ENCODE measurements at regions of chr12 and their contacts with region 1.

Region 1: DNA sequence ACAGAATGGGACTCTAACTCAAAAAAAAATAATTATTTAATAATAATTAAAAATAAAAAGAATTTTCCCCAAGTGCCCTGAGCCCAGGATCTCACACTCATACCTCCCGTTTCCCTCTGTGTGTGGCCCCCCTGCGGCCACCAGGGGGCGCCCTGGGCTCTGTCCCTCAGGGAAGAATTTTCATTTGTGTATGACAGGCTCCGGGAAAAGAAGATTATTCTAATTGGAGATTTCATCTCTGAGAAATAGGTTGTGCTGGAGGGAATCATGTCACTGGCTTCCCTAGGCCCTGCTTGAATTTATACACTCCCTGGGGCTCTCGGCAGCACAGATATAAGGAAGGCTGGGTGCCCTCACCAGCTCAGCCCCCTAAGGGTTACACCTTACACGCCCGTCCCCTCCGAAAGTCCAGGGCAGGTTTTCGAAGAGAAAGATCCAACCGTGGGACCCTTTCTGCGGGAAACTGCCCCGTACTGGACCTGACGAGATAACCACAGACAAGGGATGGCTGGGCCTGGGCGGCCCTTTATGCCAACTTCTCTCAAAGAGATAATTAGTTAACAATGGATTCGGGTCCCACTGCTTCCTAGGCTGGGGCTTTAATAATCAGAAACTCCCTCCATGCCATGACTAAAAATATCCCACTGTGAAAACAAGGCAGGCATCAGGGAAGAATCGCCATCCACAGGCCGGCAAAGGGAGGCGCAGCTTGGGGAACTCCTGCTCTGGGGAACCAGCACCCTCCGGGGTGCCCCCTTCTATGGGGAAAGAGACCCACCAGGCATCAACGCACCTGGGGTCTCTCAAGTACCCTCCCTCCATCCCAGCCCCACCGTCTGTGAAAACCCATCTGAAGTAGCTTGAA is 80.7 kb downstream of the KDM2B start:
- DNase-seq: peak; percentile 55 to 88 (median 76)
- ATAC-seq: peak; percentile 80
- H3K4me3 ChIP-seq: no peak overlapping the region
- H3K4me3 Mint-ChIP-seq: no peak overlapping the region
- H3K27ac ChIP-seq: no peak overlapping the region
- H3K27ac Mint-ChIP-seq: no peak overlapping the region
- H3K4me1 ChIP-seq: peaks cover 13% of the 10 kb centered on the region
- H3K4me1 Mint-ChIP-seq: peaks cover 12% of the 10 kb centered on the region
- H3K27me3 ChIP-seq: no peaks in the 10 kb centered on the region
- H3K27me3 Mint-ChIP-seq: no peaks in the 10 kb centered on the region
- CTCF ChIP-seq: peak; percentile 97

Region 2: GRCh38 chr12:121536899-121537813 is 37.0 kb after region 1 on chr12:
- CTCF ChIA-PET with region 1: interaction called, 12 read pairs
- POLR2A ChIA-PET with region 1: no interaction called
- intact Hi-C with region 1: loop called (anchors 1 to 2 kb)
- DNase-seq: peak in 8 of 9 experiments; percentile 22 to 83 (median 58)
- ATAC-seq: peak; percentile 5
- H3K4me3 ChIP-seq: peak overlapping the region; percentile 52 to 68
- H3K4me3 Mint-ChIP-seq: peak overlapping the region; percentile 80
- H3K27ac ChIP-seq: peak overlapping the region; percentile 80 to 83
- H3K27ac Mint-ChIP-seq: peak overlapping the region; percentile 96
- H3K4me1 ChIP-seq: peaks cover 34% of the 10 kb centered on the region
- H3K4me1 Mint-ChIP-seq: peaks cover 43% of the 10 kb centered on the region
- H3K27me3 ChIP-seq: no peaks in the 10 kb centered on the region
- H3K27me3 Mint-ChIP-seq: no peaks in the 10 kb centered on the region
- CTCF ChIP-seq: no peak

Region 3: DNA sequence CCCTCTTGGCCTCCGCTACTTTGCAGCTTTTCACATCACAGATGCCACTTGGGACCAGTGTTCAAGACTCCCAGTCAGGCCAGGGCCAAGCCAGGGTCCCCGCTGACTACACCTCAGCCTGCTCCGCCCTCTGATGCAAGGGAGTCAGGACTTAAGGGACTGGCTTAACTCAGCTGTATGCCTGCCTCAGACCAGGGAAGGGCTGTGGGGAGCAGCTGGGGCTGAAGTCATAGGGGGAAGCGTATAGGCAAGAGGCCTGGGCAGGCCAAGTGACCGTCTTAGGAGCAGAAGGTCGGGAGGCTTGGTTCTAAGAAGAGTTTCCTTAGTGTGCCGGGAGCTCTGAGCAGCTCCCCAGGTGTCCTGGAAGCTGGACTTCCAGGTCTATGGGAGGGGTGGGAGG is 58.8 kb after region 1 on chr12:
- CTCF ChIA-PET with region 1: interaction called, 18 read pairs
- POLR2A ChIA-PET with region 1: no interaction called
- intact Hi-C with region 1: loop called in 1 of 2 experiments (anchors 5 kb)
- DNase-seq: no peak
- ATAC-seq: no peak
- H3K4me3 ChIP-seq: no peak overlapping the region
- H3K4me3 Mint-ChIP-seq: no peak overlapping the region
- H3K27ac ChIP-seq: peak overlapping the region in 1 of 2 experiments; percentile 96
- H3K27ac Mint-ChIP-seq: peak overlapping the region; percentile 78
- H3K4me1 ChIP-seq: no peaks in the 10 kb centered on the region
- H3K4me1 Mint-ChIP-seq: peaks cover 12% of the 10 kb centered on the region
- H3K27me3 ChIP-seq: no peaks in the 10 kb centered on the region
- H3K27me3 Mint-ChIP-seq: no peaks in the 10 kb centered on the region
- CTCF ChIP-seq: no peak

Region 4: GRCh38 chr12:121579981-121580868 is 80.1 kb after region 1 on chr12:
- CTCF ChIA-PET with region 1: interaction called, 6 read pairs
- POLR2A ChIA-PET with region 1: no interaction called
- intact Hi-C with region 1: loop called in 1 of 2 experiments (anchors 2 kb)
- DNase-seq: peak; percentile 63 to 91 (median 82)
- ATAC-seq: peak; percentile 62
- H3K4me3 ChIP-seq: peak overlapping the region; percentile 58 to 73
- H3K4me3 Mint-ChIP-seq: peak overlapping the region; percentile 95
- H3K27ac ChIP-seq: peak overlapping the region; percentile 84 to 85
- H3K27ac Mint-ChIP-seq: peak overlapping the region; percentile 98
- H3K4me1 ChIP-seq: peaks cover 42% of the 10 kb centered on the region
- H3K4me1 Mint-ChIP-seq: peaks cover 51% of the 10 kb centered on the region
- H3K27me3 ChIP-seq: no peaks in the 10 kb centered on the region
- H3K27me3 Mint-ChIP-seq: no peaks in the 10 kb centered on the region
- CTCF ChIP-seq: no peak

Region 5: DNA sequence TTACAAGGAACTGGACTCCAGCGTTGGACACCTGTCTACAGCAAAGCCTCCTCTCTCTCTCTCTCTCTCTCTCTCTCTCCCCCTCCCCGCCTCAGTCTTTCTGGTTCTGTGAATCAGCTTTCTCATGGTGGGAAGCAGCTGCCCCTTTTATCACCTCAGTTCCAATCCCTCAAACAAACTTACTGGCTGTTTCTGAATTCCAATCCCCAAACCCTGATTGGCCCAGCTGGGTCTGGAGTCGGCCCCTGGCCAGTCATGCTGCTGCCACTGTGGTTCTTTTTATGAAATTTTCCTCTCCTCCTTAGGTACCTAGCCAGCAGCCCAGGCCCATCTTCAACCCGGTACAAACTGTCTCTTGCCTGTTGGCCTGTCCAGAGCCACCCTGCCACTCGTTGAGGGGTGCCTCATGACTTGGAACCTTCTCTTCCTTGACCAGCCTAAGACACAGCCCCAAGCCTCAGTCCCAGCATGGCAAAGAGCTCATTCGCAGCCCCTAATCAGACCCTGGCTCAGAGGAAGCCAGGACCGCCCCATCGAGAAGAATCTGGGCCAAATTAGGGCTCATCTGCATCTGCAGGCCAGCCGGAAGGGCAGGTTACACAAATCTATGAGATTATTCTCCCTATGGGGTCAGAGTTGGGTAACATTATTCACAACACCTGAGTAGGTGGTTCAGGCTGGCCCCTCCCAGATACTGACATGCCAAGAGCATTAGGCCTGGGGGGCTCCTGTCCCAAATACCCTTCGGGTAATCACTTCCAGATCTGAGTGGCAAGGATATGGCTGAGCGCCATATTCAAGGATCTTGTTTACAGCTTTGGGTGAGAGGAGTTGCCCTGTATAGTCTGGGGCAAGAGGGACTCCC is 178.8 kb after region 1 on chr12:
- CTCF ChIA-PET with region 1: interaction called, 14 read pairs
- POLR2A ChIA-PET with region 1: interaction called, 3 read pairs
- intact Hi-C with region 1: loop called (anchors 1 kb)
- DNase-seq: no peak
- ATAC-seq: no peak
- H3K4me3 ChIP-seq: no peak overlapping the region
- H3K4me3 Mint-ChIP-seq: no peak overlapping the region
- H3K27ac ChIP-seq: no peak overlapping the region
- H3K27ac Mint-ChIP-seq: peak overlapping the region; percentile 83
- H3K4me1 ChIP-seq: peaks cover 5% of the 10 kb centered on the region
- H3K4me1 Mint-ChIP-seq: peaks cover 12% of the 10 kb centered on the region
- H3K27me3 ChIP-seq: no peaks in the 10 kb centered on the region
- H3K27me3 Mint-ChIP-seq: no peaks in the 10 kb centered on the region
- CTCF ChIP-seq: no peak

Region 6: DNA sequence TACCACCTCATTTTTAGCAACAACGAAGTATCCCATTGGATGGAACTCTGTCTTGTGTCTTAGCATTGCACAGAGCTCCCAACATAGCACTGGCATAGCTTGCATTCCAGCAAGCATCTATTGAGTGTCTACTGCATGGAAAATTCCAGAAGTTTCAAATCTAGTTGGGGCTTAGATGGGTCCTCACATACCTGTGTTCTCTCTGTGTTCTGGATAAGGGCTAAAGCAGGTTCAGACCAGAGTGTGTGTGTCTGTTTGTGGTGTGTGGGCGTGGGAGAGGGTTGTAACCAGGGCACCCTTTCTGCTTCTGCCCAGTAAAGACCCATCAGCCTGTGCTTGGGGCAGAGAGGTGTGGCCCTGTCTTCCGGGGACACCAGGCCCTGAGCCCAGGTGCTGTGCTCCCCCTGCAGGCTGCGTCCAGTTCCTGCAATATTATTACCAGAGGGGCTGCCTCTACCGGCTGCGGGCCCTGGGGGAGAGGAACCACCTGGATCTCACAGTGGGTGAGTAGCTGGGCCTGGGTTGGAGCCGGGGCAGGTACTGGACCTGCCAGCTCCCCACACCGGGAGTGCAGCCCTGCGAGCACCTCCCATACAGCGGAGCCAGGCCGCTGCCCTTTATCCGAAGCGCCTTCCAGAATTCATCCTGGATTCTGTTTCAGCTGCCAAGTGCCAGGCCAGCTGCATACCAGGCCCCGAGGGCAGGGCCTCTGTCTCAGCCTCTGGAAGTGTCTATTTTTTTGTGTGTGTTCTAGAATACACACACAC is 273.0 kb after region 1 on chr12:
- CTCF ChIA-PET with region 1: no interaction called
- POLR2A ChIA-PET with region 1: no interaction called
- intact Hi-C with region 1: loop called in 1 of 2 experiments (anchors 5 kb)
- DNase-seq: peak; percentile 63 to 88 (median 80)
- ATAC-seq: peak; percentile 90
- H3K4me3 ChIP-seq: no peak overlapping the region
- H3K4me3 Mint-ChIP-seq: no peak overlapping the region
- H3K27ac ChIP-seq: peak overlapping the region in 1 of 2 experiments; percentile 32
- H3K27ac Mint-ChIP-seq: peak overlapping the region; percentile 57
- H3K4me1 ChIP-seq: peaks cover 29% of the 10 kb centered on the region
- H3K4me1 Mint-ChIP-seq: peaks cover 16% of the 10 kb centered on the region
- H3K27me3 ChIP-seq: no peaks in the 10 kb centered on the region
- H3K27me3 Mint-ChIP-seq: no peaks in the 10 kb centered on the region
- CTCF ChIP-seq: peak; percentile 82